Endothelial cell of umbilical vein (primary cell): ENCODE measurements at regions of chr3 and their contacts with region 1.

Region 1: GRCh38 chr3:126522363-126522788 is 1.6 kb upstream of the CHST13 start:
- DNase-seq: peak; percentile 43
- H3K4me3 ChIP-seq: no peak overlapping the region
- H3K27ac ChIP-seq: no peak overlapping the region
- H3K4me1 ChIP-seq: no peaks in the 10 kb centered on the region
- H3K27me3 ChIP-seq: peaks cover 13 to 17% of the 10 kb centered on the region in 2 experiments
- CTCF ChIP-seq: peak; percentile 67 to 78
- POLR2A ChIP-seq: no peak

Region 2: DNA sequence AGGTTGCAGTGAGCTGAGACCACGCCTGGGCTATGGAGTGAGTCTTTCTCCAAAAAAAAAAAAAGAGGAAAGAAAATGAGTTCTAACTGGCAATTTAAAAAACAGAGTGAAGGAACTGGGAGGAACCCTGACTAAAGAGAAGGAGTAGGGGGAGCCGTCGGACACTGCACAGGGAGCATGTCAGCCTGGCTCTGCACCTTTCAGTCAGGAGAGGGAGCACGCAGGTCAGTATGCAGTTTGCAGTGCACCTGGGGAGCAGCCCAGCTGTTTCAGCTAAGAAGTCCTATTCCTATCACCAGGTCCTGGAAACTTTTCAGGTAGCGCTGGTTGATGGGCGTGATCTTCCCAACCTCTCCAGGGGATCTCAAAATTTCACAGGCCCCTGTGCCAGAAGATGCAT is 31.8 kb before region 1 on chr3:
- CTCF ChIA-PET with region 1: no interaction called
- POLR2A ChIA-PET with region 1: no interaction called
- dilution Hi-C with region 1: no loop called
- intact Hi-C with region 1: no loop called
- DNase-seq: no peak
- H3K4me3 ChIP-seq: no peak overlapping the region
- H3K27ac ChIP-seq: no peak overlapping the region
- H3K4me1 ChIP-seq: peaks cover 15% of the 10 kb centered on the region
- H3K27me3 ChIP-seq: peaks cover 0 to 1% of the 10 kb centered on the region in 2 experiments
- CTCF ChIP-seq: no peak
- POLR2A ChIP-seq: no peak

Region 3: GRCh38 chr3:126654571-126655383 is 132.4 kb after region 1 on chr3 and contains the start of gene TXNRD3:
- CTCF ChIA-PET with region 1: interaction called, 4 read pairs
- POLR2A ChIA-PET with region 1: no interaction called
- dilution Hi-C with region 1: no loop called
- intact Hi-C with region 1: loop called (anchors 2 kb)
- DNase-seq: peak; percentile 64
- H3K4me3 ChIP-seq: peak within 1 kb of the TSS; percentile 41 to 84 (median 55)
- H3K27ac ChIP-seq: peak within 1 kb of the TSS; percentile 37
- H3K4me1 ChIP-seq: peaks cover 8% of the 10 kb centered on the region
- H3K27me3 ChIP-seq: peaks cover 0 to 6% of the 10 kb centered on the region in 2 experiments
- CTCF ChIP-seq: no peak
- POLR2A ChIP-seq: no peak
- total RNA-seq, gene TXNRD3: 5.0 and 7.1 TPM in 2 replicates

Region 4: GRCh38 chr3:127141921-127142730 is 619.8 kb after region 1 on chr3:
- CTCF ChIA-PET with region 1: no interaction called
- POLR2A ChIA-PET with region 1: no interaction called
- dilution Hi-C with region 1: no loop called
- intact Hi-C with region 1: no loop called
- DNase-seq: no peak
- H3K4me3 ChIP-seq: no peak overlapping the region
- H3K27ac ChIP-seq: no peak overlapping the region
- H3K4me1 ChIP-seq: no peaks in the 10 kb centered on the region
- H3K27me3 ChIP-seq: no peaks in the 10 kb centered on the region
- CTCF ChIP-seq: no peak
- POLR2A ChIP-seq: no peak